ENCODE measurements at regions of chr5 and their contacts with region 1.

Region 1: GRCh38 chr5:127875235-127876021 is 172.2 kb downstream of the CCDC192 start:
- DNase-seq: peak; percentile 71
- ATAC-seq: peak; percentile 92
- H3K4me3 ChIP-seq: no peak overlapping the region
- H3K27ac ChIP-seq: no peak overlapping the region
- H3K4me1 ChIP-seq: no peaks in the 10 kb centered on the region; the same call in 1 of the 2 replicates
- H3K27me3 ChIP-seq: no peaks in the 10 kb centered on the region
- CTCF ChIP-seq: peak; percentile 29 to 57 (median 43); a peak in 5 of 6 replicates
- EP300 ChIP-seq: no peak
- POLR2A ChIP-seq: no peak
- RAD21 ChIP-seq: peak; percentile 81

Region 2: GRCh38 chr5:127572930-127573329 is 302.5 kb before region 1 on chr5:
- CTCF ChIA-PET with region 1: interaction called, 7 read pairs
- POLR2A ChIA-PET with region 1: no interaction called
- RAD21 ChIA-PET with region 1: interaction called, 5 read pairs
- SMC1A ChIA-PET with region 1: interaction called, 14 read pairs
- in situ Hi-C with region 1: no loop called
- intact Hi-C with region 1: no loop called
- DNase-seq: no peak
- ATAC-seq: peak; percentile 62
- H3K4me3 ChIP-seq: no peak overlapping the region
- H3K27ac ChIP-seq: no peak overlapping the region
- H3K4me1 ChIP-seq: peaks cover 18% of the 10 kb centered on the region
- H3K27me3 ChIP-seq: no peaks in the 10 kb centered on the region
- CTCF ChIP-seq: peak; percentile 7 to 33 (median 17); a peak in 2 of 6 replicates
- EP300 ChIP-seq: no peak
- POLR2A ChIP-seq: no peak
- RAD21 ChIP-seq: peak; percentile 32; the same call in 1 of the 2 replicates

Region 3: GRCh38 chr5:127705120-127705892 is 170.1 kb before region 1 on chr5:
- CTCF ChIA-PET with region 1: no interaction called
- POLR2A ChIA-PET with region 1: no interaction called
- RAD21 ChIA-PET with region 1: no interaction called
- SMC1A ChIA-PET with region 1: no interaction called
- in situ Hi-C with region 1: no loop called
- intact Hi-C with region 1: no loop called
- DNase-seq: no peak
- ATAC-seq: peak; percentile 61
- H3K4me3 ChIP-seq: no peak overlapping the region
- H3K27ac ChIP-seq: no peak overlapping the region
- H3K4me1 ChIP-seq: no peaks in the 10 kb centered on the region
- H3K27me3 ChIP-seq: no peaks in the 10 kb centered on the region
- CTCF ChIP-seq: no peak
- EP300 ChIP-seq: 0 out of 4 replicates have a peak, but pooled peaks of 1 of the 2 experiments have one; percentile 12
- POLR2A ChIP-seq: no peak
- RAD21 ChIP-seq: no peak

Region 4: DNA sequence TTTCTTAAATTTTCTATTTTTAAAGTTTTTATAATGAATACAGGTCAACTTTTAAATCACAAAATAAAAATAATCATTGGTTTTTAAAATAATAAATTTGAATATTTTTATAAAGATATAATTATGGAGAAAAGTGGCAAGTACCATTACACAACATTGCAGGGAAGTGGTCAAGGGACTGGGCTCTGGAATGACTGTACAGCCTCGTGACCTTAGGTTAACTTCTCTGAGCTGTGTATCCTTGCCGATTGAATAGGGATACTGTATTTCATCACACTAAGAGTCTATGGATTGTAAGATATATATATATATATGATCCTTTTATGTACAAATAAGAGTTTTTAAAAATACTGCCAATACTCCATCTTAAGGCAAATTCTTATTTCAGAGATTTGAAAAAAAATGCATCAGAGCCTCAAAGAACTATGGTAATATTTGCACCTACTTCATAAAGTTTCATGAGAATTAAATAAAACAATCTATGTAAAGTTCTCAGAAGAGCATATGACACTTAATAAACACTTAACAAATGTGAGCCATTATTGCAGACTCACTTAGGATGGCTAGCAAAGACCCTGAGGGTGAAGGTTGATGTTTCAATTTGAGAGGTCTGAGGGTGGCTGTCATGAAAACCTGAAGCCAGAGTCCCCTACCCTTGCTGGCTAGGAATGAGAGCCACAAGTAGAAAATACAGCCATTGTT is 35.8 kb before region 1 on chr5:
- CTCF ChIA-PET with region 1: interaction called, 3 read pairs
- POLR2A ChIA-PET with region 1: interaction called, 3 read pairs
- RAD21 ChIA-PET with region 1: no interaction called
- SMC1A ChIA-PET with region 1: interaction called, 11 read pairs
- in situ Hi-C with region 1: no loop called
- intact Hi-C with region 1: loop called (anchors 2 kb)
- DNase-seq: no peak
- ATAC-seq: peak; percentile 86
- H3K4me3 ChIP-seq: no peak overlapping the region
- H3K27ac ChIP-seq: no peak overlapping the region
- H3K4me1 ChIP-seq: no peaks in the 10 kb centered on the region
- H3K27me3 ChIP-seq: no peaks in the 10 kb centered on the region
- CTCF ChIP-seq: no peak
- EP300 ChIP-seq: no peak
- POLR2A ChIP-seq: no peak
- RAD21 ChIP-seq: no peak

Region 5: DNA sequence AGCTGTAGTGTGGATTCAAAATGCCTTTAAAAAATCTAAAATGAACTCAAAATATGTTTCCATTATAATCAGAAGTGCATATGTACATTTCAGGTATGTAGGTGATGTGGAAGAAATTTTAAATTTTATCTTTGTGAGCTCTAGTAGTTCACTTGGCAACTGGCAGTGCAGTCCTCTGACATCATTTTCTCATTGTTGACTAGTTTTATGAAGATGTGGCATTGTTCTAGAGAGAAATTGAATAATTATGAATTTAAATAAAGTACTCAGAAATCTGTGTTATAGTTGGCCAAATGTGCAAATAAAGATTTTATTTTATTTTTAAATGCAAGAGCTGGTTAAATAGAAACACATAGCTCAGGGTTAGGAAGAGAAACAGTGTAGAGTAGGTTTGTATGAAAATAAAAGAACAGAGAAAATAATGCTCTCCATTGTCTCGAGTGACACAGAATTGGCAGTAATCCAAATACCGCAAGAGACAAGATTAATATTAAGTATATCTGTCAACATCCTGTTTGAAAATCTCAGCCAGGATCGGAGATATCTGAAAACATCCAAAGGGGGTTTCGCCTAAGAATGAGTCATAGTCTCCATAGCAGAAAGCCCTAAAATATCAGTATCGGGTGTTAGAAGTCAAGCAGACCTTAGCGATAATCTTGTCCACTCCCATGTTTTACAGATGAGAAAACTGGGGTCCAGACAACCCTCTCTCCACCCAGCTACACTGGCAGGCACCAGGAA is 17.2 kb after region 1 on chr5:
- CTCF ChIA-PET with region 1: interaction called, 7 read pairs
- POLR2A ChIA-PET with region 1: no interaction called
- RAD21 ChIA-PET with region 1: interaction called, 7 read pairs
- SMC1A ChIA-PET with region 1: interaction called, 22 read pairs
- in situ Hi-C with region 1: no loop called
- intact Hi-C with region 1: no loop called
- DNase-seq: no peak
- ATAC-seq: peak; percentile 69
- H3K4me3 ChIP-seq: no peak overlapping the region
- H3K27ac ChIP-seq: no peak overlapping the region
- H3K4me1 ChIP-seq: no peaks in the 10 kb centered on the region
- H3K27me3 ChIP-seq: no peaks in the 10 kb centered on the region
- CTCF ChIP-seq: no peak
- EP300 ChIP-seq: no peak
- POLR2A ChIP-seq: no peak
- RAD21 ChIP-seq: no peak

Region 6: GRCh38 chr5:127909078-127909477 is 33.6 kb after region 1 on chr5:
- CTCF ChIA-PET with region 1: interaction called, 9 read pairs
- POLR2A ChIA-PET with region 1: interaction called, 7 read pairs
- RAD21 ChIA-PET with region 1: interaction called, 10 read pairs
- SMC1A ChIA-PET with region 1: interaction called, 20 read pairs
- in situ Hi-C with region 1: no loop called
- intact Hi-C with region 1: no loop called
- DNase-seq: no peak
- ATAC-seq: peak; percentile 96
- H3K4me3 ChIP-seq: no peak overlapping the region
- H3K27ac ChIP-seq: no peak overlapping the region
- H3K4me1 ChIP-seq: no peaks in the 10 kb centered on the region
- H3K27me3 ChIP-seq: no peaks in the 10 kb centered on the region
- CTCF ChIP-seq: peak; percentile 65 to 82 (median 75)
- EP300 ChIP-seq: no peak
- POLR2A ChIP-seq: no peak
- RAD21 ChIP-seq: peak; percentile 82

Region 7: GRCh38 chr5:128201065-128201926 is 325.9 kb after region 1 on chr5:
- CTCF ChIA-PET with region 1: interaction called, 78 read pairs
- POLR2A ChIA-PET with region 1: no interaction called
- RAD21 ChIA-PET with region 1: interaction called, 21 read pairs
- SMC1A ChIA-PET with region 1: interaction called, 15 read pairs
- in situ Hi-C with region 1: no loop called
- intact Hi-C with region 1: loop called (anchors 1 kb)
- DNase-seq: no peak
- ATAC-seq: peak; percentile 97
- H3K4me3 ChIP-seq: no peak overlapping the region
- H3K27ac ChIP-seq: no peak overlapping the region
- H3K4me1 ChIP-seq: peaks cover 4% of the 10 kb centered on the region; the same call in 1 of the 2 replicates
- H3K27me3 ChIP-seq: no peaks in the 10 kb centered on the region
- CTCF ChIP-seq: peak; percentile 81 to 90 (median 86)
- EP300 ChIP-seq: no peak
- POLR2A ChIP-seq: no peak
- RAD21 ChIP-seq: peak; percentile 97